HEK293T (cell line): ENCODE measurements at regions of chr7 and their contacts with region 1.

Region 1: DNA sequence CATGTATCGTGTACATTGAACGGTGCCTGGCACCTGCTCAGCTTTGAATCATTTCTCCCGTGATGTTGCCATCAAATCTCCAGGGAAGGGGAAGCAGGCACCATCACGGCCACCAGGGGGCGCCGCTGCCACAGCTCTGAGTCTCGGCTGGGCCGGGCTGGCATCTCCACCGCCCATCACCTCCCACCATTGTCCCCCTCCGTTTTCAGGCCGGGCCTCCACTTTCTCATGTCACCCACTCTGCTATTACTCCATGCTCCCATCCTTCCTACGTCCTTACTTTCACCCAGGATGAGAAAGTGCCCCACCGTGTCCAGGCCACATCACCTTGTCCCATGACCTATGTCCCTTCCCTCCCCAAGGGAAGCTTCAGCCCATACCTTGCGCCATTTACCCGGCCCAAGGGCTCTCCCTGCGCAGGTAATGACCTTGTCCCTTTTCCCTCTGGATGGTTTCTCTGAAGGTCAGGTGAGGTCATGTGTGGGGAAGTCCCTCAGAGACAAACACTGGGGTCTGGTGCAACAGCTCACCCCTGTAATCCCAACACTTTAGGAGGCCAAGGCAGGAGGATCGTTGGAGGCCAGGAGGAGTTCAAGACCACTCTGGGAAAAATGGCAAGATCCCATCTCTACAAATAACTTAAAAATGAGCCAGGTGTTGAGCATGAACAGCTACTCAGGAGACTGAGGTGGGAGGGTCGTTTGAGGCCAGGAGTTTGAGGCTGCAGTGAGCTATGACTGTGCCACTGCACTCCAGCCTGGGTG is 31.8 kb upstream of the OCM2 start:
- DNase-seq: peak; percentile 88

Region 2: GRCh38 chr7:98034081-98035035 is 12.6 kb after region 1 on chr7:
- CTCF ChIA-PET with region 1: interaction called, 12 read pairs
- POLR2A ChIA-PET with region 1: interaction called, 3 read pairs
- DNase-seq: no peak

Region 3: GRCh38 chr7:98106647-98107445 is 85.1 kb after region 1 on chr7 and contains the start of gene LMTK2:
- CTCF ChIA-PET with region 1: interaction called, 10 read pairs
- POLR2A ChIA-PET with region 1: no interaction called
- DNase-seq: peak; percentile 99

Region 4: GRCh38 chr7:98168181-98168905 is 146.6 kb after region 1 on chr7:
- CTCF ChIA-PET with region 1: interaction called, 154 read pairs
- POLR2A ChIA-PET with region 1: interaction called, 6 read pairs
- DNase-seq: peak; percentile 74